Mucosa of descending colon (tissue), 3 donors: ENCODE measurements at regions of chr11 and their contacts with region 1.

Region 1: DNA sequence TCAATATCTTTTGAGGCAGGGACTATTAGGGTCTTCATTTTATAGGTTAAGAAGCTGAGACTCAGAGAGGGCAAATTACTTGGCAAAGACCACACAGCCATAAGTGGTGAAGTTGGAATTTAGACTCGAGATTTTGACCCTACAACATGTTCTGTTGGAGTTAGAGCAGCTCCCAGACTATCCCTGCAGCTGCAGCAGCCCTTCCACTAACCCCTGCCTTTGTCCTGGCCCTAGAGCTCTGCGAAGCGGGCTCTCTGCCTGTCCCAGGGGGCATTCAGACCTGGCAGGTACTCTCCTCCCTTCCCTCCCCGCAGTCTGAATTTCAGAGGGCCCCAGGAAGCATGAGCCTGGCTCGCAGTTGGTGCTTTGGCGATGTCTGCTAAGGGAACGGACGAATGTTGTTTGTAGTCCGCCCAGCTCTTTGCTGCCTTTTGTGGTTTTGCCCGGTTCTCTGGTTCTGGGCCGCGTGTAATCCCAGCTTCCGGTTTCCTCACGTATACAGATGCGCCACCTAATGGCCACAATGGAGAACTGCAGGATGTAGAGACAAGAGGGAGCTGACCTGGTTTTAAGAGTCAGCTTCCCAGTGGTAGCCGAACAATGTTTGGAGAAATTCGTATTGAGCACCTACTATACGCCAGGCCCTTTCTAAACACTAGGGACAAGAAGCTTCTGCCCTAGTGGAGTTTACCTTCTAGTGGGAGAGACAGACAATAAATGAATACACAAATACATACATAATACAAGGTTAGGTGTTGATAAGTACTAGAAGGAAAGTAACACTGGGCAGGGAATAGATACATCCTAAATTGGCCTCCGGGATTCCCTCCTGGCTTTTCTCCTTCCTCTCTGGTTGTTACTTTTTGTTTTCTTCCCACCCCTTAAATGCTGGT is 125.2 kb downstream of the ST3GAL4 start:
- DNase-seq: peak; percentile 73 to 87 (median 76)
- ATAC-seq: peak; percentile 93
- H3K4me3 ChIP-seq: no peak overlapping the region
- H3K4me1 ChIP-seq: peaks cover 18% of the 10 kb centered on the region
- CTCF ChIP-seq: peak; percentile 90

Region 2: GRCh38 chr11:126310228-126310991 is 170.2 kb before region 1 on chr11:
- intact Hi-C with region 1: loop called (anchors 2 to 10 kb)
- DNase-seq: peak; percentile 73 to 88 (median 83)
- ATAC-seq: peak; percentile 85
- H3K4me3 ChIP-seq: no peak overlapping the region
- H3K4me1 ChIP-seq: peaks cover 19% of the 10 kb centered on the region
- CTCF ChIP-seq: peak; percentile 74